ENCODE measurements at regions of chr3 and their contacts with region 1.

Region 1: GRCh38 chr3:112979240-112979832 is 4.4 kb upstream of the CD200R1 start:
- DNase-seq: no peak

Region 2: DNA sequence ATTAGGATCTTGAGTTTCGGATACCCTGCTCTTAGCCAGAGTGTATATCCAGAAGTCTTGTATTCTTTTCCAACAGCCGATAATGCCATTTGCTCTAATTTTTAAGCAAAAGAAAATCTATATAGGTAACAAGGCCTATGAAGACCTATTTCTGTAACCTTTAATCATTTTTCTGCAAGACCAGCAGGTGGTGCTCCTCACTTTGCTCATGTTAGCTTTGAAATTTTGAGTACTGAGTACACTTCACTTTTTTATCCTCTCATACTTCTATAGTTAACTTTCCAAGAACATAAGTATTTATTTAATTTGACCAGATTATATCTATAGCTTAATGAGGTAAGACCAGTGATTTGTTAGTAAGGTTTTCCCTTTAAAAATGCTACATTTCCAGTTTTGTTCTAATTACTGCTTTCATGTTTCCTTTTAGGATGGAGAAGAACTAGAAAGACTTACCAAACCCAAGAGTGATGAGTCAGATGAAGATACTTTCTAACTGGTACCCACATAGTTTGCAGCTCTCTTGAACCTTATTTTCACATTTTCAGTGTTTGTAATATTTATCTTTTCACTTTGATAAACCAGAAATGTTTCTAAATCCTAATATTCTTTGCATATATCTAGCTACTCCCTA is 397.0 kb before region 1 on chr3:
- intact Hi-C with region 1: loop called (anchors 5 kb)
- DNase-seq: no peak

Measured in cardiac septum (tissue), 1 donor.